ENCODE measurements at regions of chr7 and their contacts with region 1.

Region 1: GRCh38 chr7:151782598-151783448 is 94.1 kb downstream of the PRKAG2 start:
- DNase-seq: peak; percentile 78
- H3K4me3 Mint-ChIP-seq: peak overlapping the region; percentile 61
- H3K27ac Mint-ChIP-seq: no peak overlapping the region
- H3K4me1 Mint-ChIP-seq: no peaks in the 10 kb centered on the region
- H3K27me3 Mint-ChIP-seq: peaks cover 66% of the 10 kb centered on the region
- CTCF ChIP-seq: peak; percentile 93

Region 2: DNA sequence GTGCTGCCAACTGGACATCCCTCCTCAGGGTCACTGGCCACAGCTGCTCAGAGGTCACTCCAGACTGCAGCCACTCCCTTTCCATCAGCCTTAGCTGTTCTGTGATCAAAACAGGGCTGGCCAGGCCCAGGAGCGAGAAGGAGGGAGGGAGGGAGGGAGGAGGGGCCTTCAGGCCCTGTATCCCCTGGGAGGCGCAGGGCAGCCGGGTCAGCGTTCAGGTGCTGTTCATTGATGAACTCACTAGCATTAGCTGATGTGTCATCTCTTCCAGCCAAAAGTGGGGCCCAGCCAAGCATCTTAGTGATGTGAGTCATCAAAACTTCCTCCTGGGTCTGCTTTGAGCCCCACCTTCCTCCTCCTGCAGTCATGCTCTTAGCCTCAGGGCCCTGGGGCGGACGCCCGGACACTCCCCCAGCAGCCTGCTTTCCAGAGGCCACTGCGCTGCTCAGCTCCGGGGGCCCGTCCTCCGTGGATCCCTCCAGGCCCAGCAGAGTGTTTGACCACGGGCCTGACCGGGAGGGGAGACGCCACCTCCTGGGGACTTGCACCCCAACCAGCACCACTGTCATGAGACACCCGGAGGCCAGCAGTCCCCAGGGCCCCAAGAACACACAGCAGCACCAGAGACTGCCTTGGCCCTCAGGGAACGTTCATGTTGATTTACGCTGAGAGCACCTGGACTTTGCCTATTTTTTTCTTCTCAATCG is 55.1 kb before region 1 on chr7:
- CTCF ChIA-PET with region 1: no interaction called
- intact Hi-C with region 1: no loop called
- DNase-seq: peak; percentile 88
- H3K4me3 Mint-ChIP-seq: peak overlapping the region; percentile 24
- H3K27ac Mint-ChIP-seq: peak overlapping the region; percentile 11
- H3K4me1 Mint-ChIP-seq: peaks cover 26% of the 10 kb centered on the region
- H3K27me3 Mint-ChIP-seq: no peaks in the 10 kb centered on the region
- CTCF ChIP-seq: no peak

Region 3: DNA sequence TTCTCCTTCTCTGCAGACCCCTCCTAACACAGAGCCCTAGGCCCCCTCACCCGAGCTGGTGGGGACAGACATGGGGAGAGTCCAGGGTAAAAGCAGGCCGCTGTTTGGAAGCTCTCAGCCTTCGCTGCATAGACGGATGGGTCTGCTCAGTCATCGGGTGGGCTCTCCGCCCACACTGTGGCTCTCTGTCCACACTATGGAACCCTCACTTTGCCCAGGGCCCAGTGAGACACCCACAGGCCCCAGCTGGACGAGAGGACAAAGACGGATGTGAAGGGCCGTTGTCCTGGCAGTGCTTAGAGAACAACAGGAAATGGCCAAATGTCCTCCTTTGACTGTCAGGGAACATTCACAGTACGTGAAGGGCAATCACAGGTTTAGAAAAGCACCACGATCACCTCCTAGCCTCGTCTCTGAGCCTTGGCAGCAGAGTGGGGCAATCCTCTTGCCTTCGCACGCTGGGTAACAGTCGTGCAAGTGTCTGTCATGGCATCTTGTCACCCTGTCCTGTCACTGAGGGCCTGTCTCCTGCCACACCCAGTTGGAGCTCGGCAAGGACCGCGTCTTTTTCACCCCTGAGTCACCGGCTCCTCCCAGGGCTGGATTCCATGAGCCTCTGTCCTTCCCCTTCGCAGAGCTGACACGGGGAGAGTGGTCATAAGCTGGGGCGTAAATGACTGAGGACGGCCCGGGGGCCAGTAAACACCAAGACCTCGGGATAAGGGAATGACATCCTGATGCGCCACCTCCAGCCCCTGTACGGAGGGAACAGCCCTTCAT is 13.5 kb after region 1 on chr7:
- CTCF ChIA-PET with region 1: interaction called, 13 read pairs
- intact Hi-C with region 1: no loop called
- DNase-seq: peak; percentile 76
- H3K4me3 Mint-ChIP-seq: no peak overlapping the region
- H3K27ac Mint-ChIP-seq: peak overlapping the region; percentile 58
- H3K4me1 Mint-ChIP-seq: peaks cover 19% of the 10 kb centered on the region
- H3K27me3 Mint-ChIP-seq: peaks cover 6% of the 10 kb centered on the region
- CTCF ChIP-seq: no peak

Region 4: DNA sequence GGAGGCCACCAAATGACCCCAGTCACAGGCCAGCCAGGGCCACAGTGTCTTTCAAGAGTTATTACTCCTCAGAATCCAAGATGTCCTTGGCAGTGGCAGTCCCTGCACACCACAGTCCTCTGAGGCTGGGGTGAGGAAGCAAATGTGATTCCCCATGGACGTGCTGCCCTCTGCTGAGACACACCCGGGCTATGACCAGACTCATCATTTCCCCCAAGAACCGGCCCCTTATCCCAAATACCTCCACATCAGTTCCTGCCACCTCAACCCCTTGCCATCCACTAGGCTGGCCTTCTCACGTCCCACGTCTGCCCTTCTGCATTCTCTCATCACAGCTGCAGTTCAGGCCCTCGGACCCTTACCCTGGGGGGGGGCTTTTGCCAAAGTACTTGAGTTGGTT is 89.1 kb after region 1 on chr7:
- CTCF ChIA-PET with region 1: interaction called, 5 read pairs
- intact Hi-C with region 1: loop called (anchors 2 kb)
- DNase-seq: no peak
- H3K4me3 Mint-ChIP-seq: no peak overlapping the region
- H3K27ac Mint-ChIP-seq: no peak overlapping the region
- H3K4me1 Mint-ChIP-seq: no peaks in the 10 kb centered on the region
- H3K27me3 Mint-ChIP-seq: peaks cover 55% of the 10 kb centered on the region
- CTCF ChIP-seq: no peak

Region 5: DNA sequence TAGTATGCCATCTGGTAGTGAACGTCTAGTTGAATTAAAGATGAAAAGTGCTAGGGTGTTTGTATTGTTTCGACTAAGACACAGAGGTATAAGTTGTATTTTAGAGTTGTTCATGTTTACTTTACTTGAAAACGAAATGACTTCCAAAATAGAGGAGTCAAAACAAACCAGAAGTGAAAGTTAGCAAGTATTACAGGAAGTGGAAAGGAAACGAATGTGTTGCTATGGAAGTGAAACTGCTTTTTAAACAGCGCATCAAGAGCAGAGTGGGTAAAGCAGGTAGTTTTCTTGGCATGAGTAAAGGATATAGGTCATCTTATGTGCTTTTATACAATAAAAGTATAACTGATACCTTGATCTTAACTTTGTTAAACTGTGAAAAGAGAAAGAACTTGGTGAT is 153.4 kb after region 1 on chr7:
- CTCF ChIA-PET with region 1: interaction called, 15 read pairs
- intact Hi-C with region 1: loop called (anchors 1 kb)
- DNase-seq: no peak
- H3K4me3 Mint-ChIP-seq: no peak overlapping the region
- H3K27ac Mint-ChIP-seq: no peak overlapping the region
- H3K4me1 Mint-ChIP-seq: peaks cover 19% of the 10 kb centered on the region
- H3K27me3 Mint-ChIP-seq: peaks cover 73% of the 10 kb centered on the region
- CTCF ChIP-seq: no peak

Region 6: GRCh38 chr7:152050547-152050971 is 267.7 kb after region 1 on chr7:
- CTCF ChIA-PET with region 1: no interaction called
- intact Hi-C with region 1: no loop called
- DNase-seq: no peak
- H3K4me3 Mint-ChIP-seq: no peak overlapping the region
- H3K27ac Mint-ChIP-seq: no peak overlapping the region
- H3K4me1 Mint-ChIP-seq: peaks cover 8% of the 10 kb centered on the region
- H3K27me3 Mint-ChIP-seq: no peaks in the 10 kb centered on the region
- CTCF ChIP-seq: no peak